CD4-positive, alpha-beta memory T cell (primary cell): ENCODE measurements at regions of chr2 and their contacts with region 1.

Region 1: DNA sequence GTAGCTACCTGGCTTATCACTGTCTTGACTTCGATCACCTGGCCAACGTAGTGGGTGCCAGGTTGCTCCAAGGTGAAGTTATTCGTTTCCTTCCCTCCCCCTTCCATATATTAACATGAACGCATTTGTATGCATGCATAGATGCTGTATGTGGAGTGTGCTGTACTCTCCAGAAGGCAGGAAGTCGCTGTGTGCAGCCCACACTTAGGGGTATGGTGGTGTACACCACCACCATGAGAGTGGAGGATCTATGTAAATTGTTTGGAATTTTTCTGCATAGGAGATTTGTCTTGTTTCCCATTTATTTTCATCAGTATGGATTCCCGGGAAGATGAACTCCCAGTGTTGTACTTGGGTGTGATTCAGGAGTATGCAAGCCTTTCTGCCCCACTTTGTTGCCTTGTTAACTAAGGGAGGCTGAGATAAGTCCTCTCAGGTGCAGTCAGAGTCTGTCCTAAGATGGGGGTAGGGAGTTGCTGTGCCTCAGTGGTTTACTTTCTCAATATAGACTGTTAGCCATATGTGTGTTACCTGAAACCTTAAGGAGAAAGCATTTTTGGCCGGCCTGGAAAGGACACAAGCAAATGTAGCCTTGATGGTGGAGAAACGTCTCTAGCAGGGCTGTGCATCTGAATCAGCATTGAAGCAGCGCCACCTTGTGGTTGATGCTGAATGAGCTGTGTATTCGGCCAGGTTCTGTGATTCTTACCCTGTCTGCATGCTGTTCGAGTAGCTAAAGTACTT is 149.8 kb downstream of the TANC1 start:
- DNase-seq: peak; percentile 54 to 63 (median 62)
- H3K4me3 ChIP-seq: no peak overlapping the region
- H3K4me3 Mint-ChIP-seq: no peak overlapping the region
- H3K27ac ChIP-seq: no peak overlapping the region
- H3K27ac Mint-ChIP-seq: no peak overlapping the region
- H3K4me1 ChIP-seq: no peaks in the 10 kb centered on the region
- H3K4me1 Mint-ChIP-seq: peaks cover 0 to 8% (median 5%) of the 10 kb centered on the region in 4 donors
- H3K27me3 ChIP-seq: peaks cover 5% of the 10 kb centered on the region
- H3K27me3 Mint-ChIP-seq: peaks cover 0 to 3% of the 10 kb centered on the region in 2 donors

Region 2: GRCh38 chr2:158024288-158024898 is 1093.9 kb before region 1 on chr2:
- CTCF ChIA-PET with region 1: interaction called, 8 read pairs
- POLR2A ChIA-PET with region 1: no interaction called
- intact Hi-C with region 1: loop called (anchors 1 kb)
- DNase-seq: peak in 4 of 5 donors; percentile 28 to 45 (median 37)
- H3K4me3 ChIP-seq: no peak overlapping the region
- H3K4me3 Mint-ChIP-seq: no peak overlapping the region
- H3K27ac ChIP-seq: no peak overlapping the region
- H3K27ac Mint-ChIP-seq: no peak overlapping the region
- H3K4me1 ChIP-seq: peaks cover 10% of the 10 kb centered on the region
- H3K4me1 Mint-ChIP-seq: peaks cover 4 to 10% (median 7%) of the 10 kb centered on the region in 4 donors
- H3K27me3 ChIP-seq: no peaks in the 10 kb centered on the region
- H3K27me3 Mint-ChIP-seq: peaks cover 0 to 2% of the 10 kb centered on the region in 2 donors

Region 3: GRCh38 chr2:158903711-158904443 is 214.4 kb before region 1 on chr2:
- CTCF ChIA-PET with region 1: interaction called, 106 read pairs
- POLR2A ChIA-PET with region 1: no interaction called
- intact Hi-C with region 1: loop called (anchors 1 kb)
- DNase-seq: no peak
- H3K4me3 ChIP-seq: no peak overlapping the region
- H3K4me3 Mint-ChIP-seq: no peak overlapping the region
- H3K27ac ChIP-seq: no peak overlapping the region
- H3K27ac Mint-ChIP-seq: no peak overlapping the region
- H3K4me1 ChIP-seq: no peaks in the 10 kb centered on the region
- H3K4me1 Mint-ChIP-seq: peaks cover 0 to 2% (median 0%) of the 10 kb centered on the region in 4 donors
- H3K27me3 ChIP-seq: no peaks in the 10 kb centered on the region
- H3K27me3 Mint-ChIP-seq: peaks cover 2 to 4% of the 10 kb centered on the region in 2 donors

Region 4: DNA sequence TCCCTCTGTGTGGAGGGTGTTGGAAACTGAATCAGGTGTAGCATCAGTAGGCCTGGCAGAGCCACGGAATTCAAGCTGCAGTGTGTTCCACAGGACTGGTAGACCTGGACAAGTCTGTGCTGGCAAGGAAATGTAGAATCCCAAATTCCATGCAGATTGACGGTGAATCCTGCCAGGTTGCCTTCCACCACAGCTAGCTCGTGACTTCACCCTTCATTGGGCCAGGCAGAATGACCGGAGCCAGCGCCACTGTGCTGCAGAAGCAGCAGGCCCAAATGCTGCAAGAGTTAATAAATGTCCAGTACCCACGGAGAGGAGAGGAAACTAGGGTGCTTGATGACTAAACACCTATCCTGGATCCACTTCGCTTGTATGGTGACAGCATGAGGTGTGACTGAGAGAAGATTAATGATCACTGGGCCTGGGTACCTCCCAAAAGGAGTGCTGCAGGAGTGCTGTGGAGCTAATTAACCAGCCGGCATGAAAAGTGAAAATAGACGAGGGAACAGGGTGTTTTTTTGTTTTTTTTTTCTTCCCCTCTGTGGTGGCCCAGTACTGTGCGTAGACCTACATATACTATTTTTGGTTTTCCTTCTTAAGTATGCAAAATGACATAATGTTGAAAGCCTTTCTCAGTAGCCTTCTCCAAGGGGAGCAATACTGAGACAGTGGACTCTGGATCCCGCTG is 27.6 kb before region 1 on chr2:
- CTCF ChIA-PET with region 1: interaction called, 20 read pairs
- POLR2A ChIA-PET with region 1: interaction called, 3 read pairs
- intact Hi-C with region 1: no loop called
- DNase-seq: peak in 1 of 5 donors; percentile 7
- H3K4me3 ChIP-seq: no peak overlapping the region
- H3K4me3 Mint-ChIP-seq: peak overlapping the region in 6 of 8 donors; percentile 41 to 63 (median 60)
- H3K27ac ChIP-seq: no peak overlapping the region
- H3K27ac Mint-ChIP-seq: peak overlapping the region in 6 of 7 donors; percentile 6 to 88 (median 68)
- H3K4me1 ChIP-seq: peaks cover 42% of the 10 kb centered on the region
- H3K4me1 Mint-ChIP-seq: peaks cover 23 to 74% (median 39%) of the 10 kb centered on the region in 4 donors
- H3K27me3 ChIP-seq: no peaks in the 10 kb centered on the region
- H3K27me3 Mint-ChIP-seq: no peaks in the 10 kb centered on the region

Region 5: GRCh38 chr2:159140070-159140769 is 21.9 kb after region 1 on chr2:
- CTCF ChIA-PET with region 1: interaction called, 19 read pairs
- POLR2A ChIA-PET with region 1: no interaction called
- intact Hi-C with region 1: no loop called
- DNase-seq: no peak
- H3K4me3 ChIP-seq: no peak overlapping the region
- H3K4me3 Mint-ChIP-seq: no peak overlapping the region
- H3K27ac ChIP-seq: no peak overlapping the region
- H3K27ac Mint-ChIP-seq: no peak overlapping the region
- H3K4me1 ChIP-seq: no peaks in the 10 kb centered on the region
- H3K4me1 Mint-ChIP-seq: peaks cover 0 to 7% (median 5%) of the 10 kb centered on the region in 4 donors
- H3K27me3 ChIP-seq: no peaks in the 10 kb centered on the region
- H3K27me3 Mint-ChIP-seq: peaks cover 1 to 8% of the 10 kb centered on the region in 2 donors